ENCODE measurements at regions of chr15 and their contacts with region 1.

Region 1: DNA sequence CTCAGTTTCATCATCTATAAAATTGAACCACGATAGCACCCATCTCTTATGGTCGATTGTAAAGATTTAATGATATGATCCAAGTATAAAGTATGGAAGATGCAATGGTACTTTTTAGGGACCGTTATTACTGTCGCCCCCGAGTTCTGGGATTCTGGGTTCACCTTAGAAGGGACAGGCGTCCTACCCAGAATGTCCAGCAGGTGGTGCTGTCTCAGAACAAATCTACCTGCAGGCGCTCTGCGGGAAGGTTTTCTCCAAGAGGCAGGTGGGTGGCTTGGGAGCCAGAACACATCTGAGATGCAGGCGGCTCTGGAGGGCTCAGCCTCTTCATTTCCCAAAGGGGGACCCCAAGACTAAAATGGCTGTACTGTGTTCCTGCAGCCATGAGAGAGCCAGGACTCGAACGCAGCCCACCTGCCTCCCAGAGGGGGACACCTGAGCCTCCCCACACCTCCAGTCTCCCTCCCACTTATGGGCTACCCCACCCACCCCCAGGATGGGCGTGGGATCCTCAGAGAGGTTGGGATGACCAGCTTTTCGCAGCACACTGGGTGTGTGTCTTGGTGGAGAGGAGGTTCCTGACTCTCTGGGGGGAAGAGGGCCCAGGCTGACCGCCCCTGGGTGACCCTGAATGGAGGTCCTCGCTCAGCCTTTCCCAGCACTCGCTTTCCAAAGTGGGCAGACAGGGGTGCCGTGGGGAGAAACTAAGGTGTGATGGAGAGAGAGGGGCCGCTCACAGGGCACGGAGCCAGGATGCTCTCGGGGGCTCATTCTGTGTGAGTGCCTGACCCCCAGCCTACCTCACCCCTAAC is 28.1 kb upstream of the CORO2B start:
- DNase-seq: peak; percentile 66 to 71
- ATAC-seq: peak; percentile 41 to 68; a peak in 4 of 6 replicates
- H3K4me3 ChIP-seq: no peak overlapping the region
- H3K27ac ChIP-seq: peak overlapping the region; percentile 51 to 64; a peak in 5 of 6 replicates
- H3K4me1 ChIP-seq: peaks cover 26% of the 10 kb centered on the region
- CTCF ChIP-seq: peak; percentile 97
- EP300 ChIP-seq: no peak
- POLR2A ChIP-seq: no peak
- RAD21 ChIP-seq: peak; percentile 79 to 85

Region 2: GRCh38 chr15:68304589-68305337 is 245.9 kb before region 1 on chr15:
- CTCF ChIA-PET with region 1: interaction called, 83 read pairs
- POLR2A ChIA-PET with region 1: interaction called, 3 read pairs
- DNase-seq: no peak
- ATAC-seq: peak; percentile 10 to 11; a peak in 3 of 6 replicates
- H3K4me3 ChIP-seq: no peak overlapping the region
- H3K27ac ChIP-seq: peak overlapping the region in 1 of 2 experiments; percentile 58; a peak in 2 of 6 replicates
- H3K4me1 ChIP-seq: peaks cover 47% of the 10 kb centered on the region
- CTCF ChIP-seq: no peak
- EP300 ChIP-seq: no peak
- POLR2A ChIP-seq: no peak
- RAD21 ChIP-seq: no peak

Region 3: GRCh38 chr15:68447209-68447608 is 103.5 kb before region 1 on chr15:
- CTCF ChIA-PET with region 1: no interaction called
- POLR2A ChIA-PET with region 1: no interaction called
- DNase-seq: no peak
- ATAC-seq: no peak
- H3K4me3 ChIP-seq: no peak overlapping the region
- H3K27ac ChIP-seq: no peak overlapping the region
- H3K4me1 ChIP-seq: no peaks in the 10 kb centered on the region
- CTCF ChIP-seq: no peak
- EP300 ChIP-seq: no peak
- POLR2A ChIP-seq: no peak
- RAD21 ChIP-seq: no peak

Region 4: DNA sequence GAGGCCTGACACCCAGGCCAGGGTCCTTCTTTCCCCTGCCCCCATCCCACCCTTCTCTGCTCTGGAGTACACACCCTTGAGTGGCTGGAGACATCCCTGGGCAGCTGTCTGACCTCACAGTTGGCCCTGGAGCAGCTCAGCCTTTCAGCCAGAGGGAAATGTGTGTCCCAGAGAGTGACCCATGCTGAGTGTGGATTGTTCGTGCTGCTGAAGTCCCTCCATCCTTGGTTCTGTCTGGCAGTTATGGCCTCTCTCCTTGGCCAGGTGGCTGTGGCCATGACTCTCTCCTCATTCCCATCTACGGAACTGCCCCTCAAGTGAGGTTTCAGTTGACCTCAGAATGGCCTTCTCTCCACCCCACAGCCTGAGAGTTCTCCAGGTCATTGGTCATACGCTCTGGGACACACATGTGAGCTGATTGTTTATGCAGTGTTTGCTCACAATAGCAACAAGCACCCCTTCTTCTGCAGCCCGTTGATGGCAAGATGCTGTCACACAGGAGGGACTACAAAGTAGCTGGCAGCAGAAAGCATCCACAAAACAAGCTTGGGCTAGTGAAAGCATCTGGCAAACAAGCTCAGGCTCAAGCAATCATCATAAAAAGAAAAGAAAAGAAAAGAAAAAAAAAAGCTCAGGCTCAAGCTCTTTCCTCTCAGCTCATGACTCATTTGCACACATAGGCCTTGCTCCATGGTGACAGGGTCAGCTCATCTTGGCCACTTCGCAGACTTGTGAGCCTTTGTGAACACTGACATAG is 63.4 kb before region 1 on chr15:
- CTCF ChIA-PET with region 1: interaction called, 13 read pairs
- POLR2A ChIA-PET with region 1: no interaction called
- DNase-seq: peak in 1 of 2 experiments; percentile 51
- ATAC-seq: peak; percentile 42 to 52; a peak in 3 of 6 replicates
- H3K4me3 ChIP-seq: no peak overlapping the region
- H3K27ac ChIP-seq: peak overlapping the region in 1 of 2 experiments; percentile 55; a peak in 2 of 6 replicates
- H3K4me1 ChIP-seq: no peaks in the 10 kb centered on the region; the same call in 2 of the 3 replicates
- CTCF ChIP-seq: no peak
- EP300 ChIP-seq: no peak
- POLR2A ChIP-seq: no peak
- RAD21 ChIP-seq: no peak

Region 5: DNA sequence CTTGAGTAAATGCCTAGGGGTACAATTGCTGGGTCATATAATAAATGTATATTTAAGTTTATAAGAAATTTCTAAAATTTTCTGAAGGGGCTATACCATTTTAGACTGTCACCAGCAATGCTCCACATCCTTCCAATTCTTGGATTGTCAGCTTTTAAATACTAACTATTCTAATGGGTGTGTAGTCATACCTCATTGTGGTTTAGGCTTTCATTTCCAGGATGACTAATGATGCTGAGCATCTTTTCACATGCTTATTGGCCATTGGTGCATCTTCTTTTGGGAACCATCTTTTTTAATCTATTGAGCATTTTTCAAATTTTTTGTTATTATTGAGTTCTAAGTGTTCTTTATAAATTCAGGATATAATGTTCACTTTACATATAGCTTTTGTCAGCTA is 24.4 kb before region 1 on chr15:
- CTCF ChIA-PET with region 1: interaction called, 37 read pairs
- POLR2A ChIA-PET with region 1: no interaction called
- DNase-seq: no peak
- ATAC-seq: no peak
- H3K4me3 ChIP-seq: no peak overlapping the region
- H3K27ac ChIP-seq: no peak overlapping the region
- H3K4me1 ChIP-seq: peaks cover 15% of the 10 kb centered on the region; the same call in 2 of the 3 replicates
- CTCF ChIP-seq: no peak
- EP300 ChIP-seq: no peak
- POLR2A ChIP-seq: no peak
- RAD21 ChIP-seq: no peak

Region 6: GRCh38 chr15:68631601-68632051 is 80.9 kb after region 1 on chr15:
- CTCF ChIA-PET with region 1: interaction called, 11 read pairs
- POLR2A ChIA-PET with region 1: no interaction called
- DNase-seq: no peak
- ATAC-seq: peak in 1 of 2 experiments; percentile 54; a peak in 3 of 6 replicates
- H3K4me3 ChIP-seq: no peak overlapping the region
- H3K27ac ChIP-seq: no peak overlapping the region
- H3K4me1 ChIP-seq: no peaks in the 10 kb centered on the region
- CTCF ChIP-seq: no peak
- EP300 ChIP-seq: no peak
- POLR2A ChIP-seq: no peak
- RAD21 ChIP-seq: no peak

Region 7: GRCh38 chr15:68672781-68673205 is 122.1 kb after region 1 on chr15:
- CTCF ChIA-PET with region 1: interaction called, 452 read pairs
- POLR2A ChIA-PET with region 1: interaction called, 4 read pairs
- DNase-seq: peak in 1 of 2 experiments; percentile 29
- ATAC-seq: peak; percentile 45 to 60; a peak in 3 of 6 replicates
- H3K4me3 ChIP-seq: no peak overlapping the region
- H3K27ac ChIP-seq: no peak overlapping the region
- H3K4me1 ChIP-seq: no peaks in the 10 kb centered on the region
- CTCF ChIP-seq: peak; percentile 28; the same call in 2 of the 3 replicates
- EP300 ChIP-seq: no peak
- POLR2A ChIP-seq: no peak
- RAD21 ChIP-seq: peak; percentile 27 to 53; a peak in 2 of 5 replicates